Calu3 (cell line): ENCODE measurements at regions of chr6 and their contacts with region 1.

Region 1: GRCh38 chr6:128327890-128328289 is 192.5 kb downstream of the PTPRK start:
- DNase-seq: peak; percentile 46
- H3K4me3 Mint-ChIP-seq: no peak overlapping the region
- H3K27ac Mint-ChIP-seq: peak overlapping the region; percentile 6
- H3K4me1 Mint-ChIP-seq: peaks cover 58% of the 10 kb centered on the region
- H3K27me3 Mint-ChIP-seq: no peaks in the 10 kb centered on the region
- CTCF ChIP-seq: peak; percentile 52

Region 2: GRCh38 chr6:127737009-127737486 is 590.8 kb before region 1 on chr6:
- CTCF ChIA-PET with region 1: interaction called, 3 read pairs
- intact Hi-C with region 1: loop called (anchors 2 kb)
- DNase-seq: peak; percentile 50
- H3K4me3 Mint-ChIP-seq: no peak overlapping the region
- H3K27ac Mint-ChIP-seq: no peak overlapping the region
- H3K4me1 Mint-ChIP-seq: no peaks in the 10 kb centered on the region
- H3K27me3 Mint-ChIP-seq: no peaks in the 10 kb centered on the region
- CTCF ChIP-seq: peak; percentile 63

Region 3: GRCh38 chr6:127855542-127856159 is 472.2 kb before region 1 on chr6:
- CTCF ChIA-PET with region 1: interaction called, 12 read pairs
- intact Hi-C with region 1: loop called (anchors 1 kb)
- DNase-seq: peak; percentile 22
- H3K4me3 Mint-ChIP-seq: no peak overlapping the region
- H3K27ac Mint-ChIP-seq: no peak overlapping the region
- H3K4me1 Mint-ChIP-seq: no peaks in the 10 kb centered on the region
- H3K27me3 Mint-ChIP-seq: no peaks in the 10 kb centered on the region
- CTCF ChIP-seq: peak; percentile 42

Region 4: GRCh38 chr6:127992144-127992543 is 335.7 kb before region 1 on chr6:
- CTCF ChIA-PET with region 1: no interaction called
- intact Hi-C with region 1: loop called (anchors 10 kb)
- DNase-seq: no peak
- H3K4me3 Mint-ChIP-seq: no peak overlapping the region
- H3K27ac Mint-ChIP-seq: no peak overlapping the region
- H3K4me1 Mint-ChIP-seq: no peaks in the 10 kb centered on the region
- H3K27me3 Mint-ChIP-seq: no peaks in the 10 kb centered on the region
- CTCF ChIP-seq: no peak

Region 5: DNA sequence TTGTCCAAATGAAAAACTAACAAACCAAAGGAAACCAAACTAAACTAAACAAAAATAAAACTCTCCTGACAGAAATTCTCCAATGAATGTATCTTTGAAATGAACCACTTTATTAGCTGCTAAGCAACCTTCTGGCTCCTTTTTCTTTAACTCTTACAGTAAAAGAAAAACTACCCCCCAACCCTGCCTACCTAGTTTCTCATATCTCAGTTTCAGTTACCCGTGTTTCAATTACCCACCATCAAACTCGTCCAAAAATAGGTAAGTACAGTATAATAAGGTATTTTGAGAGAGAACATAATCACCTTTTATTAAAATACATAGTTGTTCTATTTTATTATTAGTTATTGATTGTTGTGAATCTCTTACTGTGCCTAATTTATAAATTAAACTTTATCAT is 249.6 kb before region 1 on chr6:
- CTCF ChIA-PET with region 1: no interaction called
- intact Hi-C with region 1: loop called (anchors 10 kb)
- DNase-seq: no peak
- H3K4me3 Mint-ChIP-seq: no peak overlapping the region
- H3K27ac Mint-ChIP-seq: no peak overlapping the region
- H3K4me1 Mint-ChIP-seq: no peaks in the 10 kb centered on the region
- H3K27me3 Mint-ChIP-seq: no peaks in the 10 kb centered on the region
- CTCF ChIP-seq: no peak

Region 6: DNA sequence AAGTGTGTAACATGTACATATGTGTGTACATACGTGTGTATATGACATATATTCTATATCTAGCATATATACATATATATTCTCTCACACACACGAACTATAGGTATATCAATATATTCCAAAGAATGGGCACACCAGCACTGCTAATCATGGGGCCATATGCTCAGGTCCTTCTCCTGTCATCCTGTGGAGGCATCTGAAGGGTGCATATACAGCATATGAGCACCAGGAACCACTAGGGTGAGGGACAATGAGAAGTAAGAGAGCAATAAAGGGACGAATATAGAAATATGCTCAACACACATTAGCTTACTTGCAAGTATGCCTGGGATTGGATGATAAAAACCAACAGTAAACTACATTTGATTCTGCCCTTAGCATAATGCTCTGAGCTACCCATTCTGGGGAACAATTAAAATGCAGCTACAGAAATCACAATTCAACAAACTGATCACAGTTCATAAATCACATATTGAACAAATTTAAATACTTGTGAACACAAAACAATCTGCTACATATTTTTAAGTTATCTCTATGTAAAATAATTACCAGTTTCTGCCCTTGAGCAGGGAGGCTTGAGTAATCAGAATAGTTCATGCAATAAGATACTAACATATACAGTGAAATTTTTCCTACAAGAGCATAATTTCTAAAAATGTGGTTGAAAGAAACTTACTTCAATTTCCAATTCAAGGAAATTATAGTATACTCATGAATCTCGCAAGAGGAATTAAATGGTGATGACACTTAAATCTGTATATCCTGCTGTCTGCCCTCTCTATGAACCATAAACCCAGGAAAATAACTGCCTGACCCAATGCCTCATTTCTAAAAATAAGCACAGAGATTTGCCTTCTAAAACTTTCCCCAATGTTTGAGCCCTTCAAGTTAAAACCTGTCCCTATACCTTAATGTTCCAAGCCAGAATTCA is 154.9 kb before region 1 on chr6:
- CTCF ChIA-PET with region 1: interaction called, 3 read pairs
- intact Hi-C with region 1: loop called (anchors 5 kb)
- DNase-seq: no peak
- H3K4me3 Mint-ChIP-seq: no peak overlapping the region
- H3K27ac Mint-ChIP-seq: peak overlapping the region; percentile 5
- H3K4me1 Mint-ChIP-seq: peaks cover 24% of the 10 kb centered on the region
- H3K27me3 Mint-ChIP-seq: no peaks in the 10 kb centered on the region
- CTCF ChIP-seq: no peak

Region 7: GRCh38 chr6:128259730-128260685 is 67.9 kb before region 1 on chr6:
- CTCF ChIA-PET with region 1: no interaction called
- intact Hi-C with region 1: loop called (anchors 2 kb)
- DNase-seq: no peak
- H3K4me3 Mint-ChIP-seq: no peak overlapping the region
- H3K27ac Mint-ChIP-seq: no peak overlapping the region
- H3K4me1 Mint-ChIP-seq: peaks cover 12% of the 10 kb centered on the region
- H3K27me3 Mint-ChIP-seq: no peaks in the 10 kb centered on the region
- CTCF ChIP-seq: no peak

Region 8: DNA sequence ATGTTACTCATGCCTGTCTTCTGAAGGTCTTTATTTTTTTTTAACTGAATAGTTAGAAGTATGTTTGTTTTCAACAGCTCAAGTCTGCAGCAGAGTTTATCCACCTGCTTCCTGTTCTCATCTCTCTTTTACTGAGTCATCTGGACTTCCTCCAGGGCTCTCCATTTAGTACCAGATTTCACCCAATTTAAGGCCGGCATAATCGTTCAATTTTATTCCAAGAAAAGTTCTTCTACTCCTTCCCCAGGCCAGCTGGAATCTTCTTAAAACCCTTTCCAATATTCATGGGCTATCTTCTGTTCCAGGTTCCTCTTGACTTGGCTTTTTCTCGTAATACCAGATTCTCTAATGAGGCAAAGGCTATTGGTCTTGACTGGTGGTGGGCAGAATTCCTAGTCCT is 476.0 kb after region 1 on chr6:
- CTCF ChIA-PET with region 1: no interaction called
- intact Hi-C with region 1: no loop called
- DNase-seq: no peak
- H3K4me3 Mint-ChIP-seq: no peak overlapping the region
- H3K27ac Mint-ChIP-seq: no peak overlapping the region
- H3K4me1 Mint-ChIP-seq: no peaks in the 10 kb centered on the region
- H3K27me3 Mint-ChIP-seq: no peaks in the 10 kb centered on the region
- CTCF ChIP-seq: no peak